Panc1 (cell line): ENCODE measurements at regions of chr11 and their contacts with region 1.

Region 1: DNA sequence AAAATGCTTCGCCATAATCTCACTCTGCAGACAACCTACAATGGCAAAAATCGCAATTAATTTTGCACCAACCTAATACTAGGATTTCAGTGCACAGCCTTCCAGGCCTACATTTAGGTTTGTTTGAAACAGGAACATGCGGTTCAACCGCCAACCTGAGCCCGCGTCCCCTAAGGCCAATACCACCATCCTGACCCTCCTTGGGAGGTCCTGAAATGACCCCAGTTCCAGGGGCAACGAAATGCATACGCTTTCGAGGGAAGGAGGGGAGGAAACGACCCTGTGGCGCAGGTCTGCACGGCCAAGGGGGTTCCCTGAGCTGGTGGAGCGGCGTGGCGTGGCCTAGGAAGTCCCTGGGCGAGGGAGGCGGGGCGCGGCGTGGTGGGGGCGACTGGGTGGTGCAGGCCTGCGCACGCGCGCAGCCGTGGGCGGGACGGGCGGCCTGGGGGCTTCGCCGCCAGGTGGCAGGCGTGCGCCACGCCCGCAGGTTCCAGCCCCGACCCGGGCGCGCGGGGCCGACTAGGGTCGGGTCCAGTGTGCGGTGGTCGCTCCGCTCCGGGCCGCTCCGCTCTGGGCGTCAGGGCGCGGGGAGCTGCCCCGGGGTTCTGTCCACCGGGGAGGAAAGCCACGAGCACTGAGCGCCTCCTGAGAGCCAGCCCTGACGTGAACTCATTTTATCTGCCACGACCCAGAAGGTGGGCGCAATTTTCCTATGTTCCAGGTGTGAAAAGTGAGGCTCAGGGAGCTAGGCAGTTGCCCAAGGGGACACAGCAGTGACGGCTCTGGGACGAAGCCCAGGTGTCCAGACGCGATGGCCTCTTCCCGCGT is 94.1 kb downstream of the SWAP70 start:
- DNase-seq: peak; percentile 38
- ATAC-seq: peak; percentile 66
- H3K4me3 ChIP-seq: peak overlapping the region; percentile 51 to 81
- H3K27ac ChIP-seq: peak overlapping the region; percentile 100
- H3K4me1 ChIP-seq: peaks cover 85% of the 10 kb centered on the region
- H3K27me3 ChIP-seq: no peaks in the 10 kb centered on the region
- CTCF ChIP-seq: peak; percentile 100

Region 2: DNA sequence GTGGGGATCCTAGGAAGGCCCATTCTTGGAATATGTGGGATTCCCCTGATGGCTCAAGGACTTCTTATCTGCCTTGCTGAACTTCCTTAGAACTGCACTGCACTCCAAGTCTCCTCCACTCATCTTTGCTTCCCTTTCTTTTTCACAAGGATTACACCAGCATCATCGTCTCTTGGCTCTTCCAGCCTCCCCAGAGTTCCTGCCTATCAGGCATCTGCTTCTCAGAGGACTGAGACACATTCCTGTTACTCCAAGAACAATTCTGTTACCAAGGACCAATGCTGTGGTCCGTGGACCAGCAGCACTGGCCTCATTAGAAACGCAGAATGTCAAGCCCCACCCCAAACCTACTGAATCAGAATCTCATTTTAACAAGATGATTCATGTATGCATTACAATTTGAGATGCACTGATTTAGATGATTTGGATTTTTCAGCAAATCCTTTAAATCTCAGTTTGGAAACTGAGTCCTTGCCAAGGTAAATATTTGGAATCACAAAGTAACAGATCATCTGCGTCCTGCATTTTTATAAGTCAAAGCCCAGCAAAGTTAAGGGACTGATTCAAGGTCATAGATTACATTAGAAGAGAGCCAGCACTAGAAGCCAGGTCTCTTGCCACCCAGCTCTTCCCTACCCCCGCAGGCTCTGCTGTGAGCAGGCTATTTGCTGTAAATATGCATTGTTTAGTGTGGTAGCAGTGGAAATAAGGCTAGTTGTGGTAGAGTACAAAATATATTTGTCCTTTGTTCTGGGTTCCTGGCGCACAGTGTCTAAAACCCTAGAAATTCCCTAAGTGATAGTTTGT is 16.8 kb after region 1 on chr11:
- CTCF ChIA-PET with region 1: no interaction called
- POLR2A ChIA-PET with region 1: no interaction called
- in situ Hi-C with region 1: no loop called
- intact Hi-C with region 1: no loop called
- DNase-seq: no peak
- ATAC-seq: peak; percentile 69
- H3K4me3 ChIP-seq: no peak overlapping the region
- H3K27ac ChIP-seq: peak overlapping the region; percentile 88
- H3K4me1 ChIP-seq: peaks cover 35% of the 10 kb centered on the region
- H3K27me3 ChIP-seq: no peaks in the 10 kb centered on the region
- CTCF ChIP-seq: no peak

Region 3: DNA sequence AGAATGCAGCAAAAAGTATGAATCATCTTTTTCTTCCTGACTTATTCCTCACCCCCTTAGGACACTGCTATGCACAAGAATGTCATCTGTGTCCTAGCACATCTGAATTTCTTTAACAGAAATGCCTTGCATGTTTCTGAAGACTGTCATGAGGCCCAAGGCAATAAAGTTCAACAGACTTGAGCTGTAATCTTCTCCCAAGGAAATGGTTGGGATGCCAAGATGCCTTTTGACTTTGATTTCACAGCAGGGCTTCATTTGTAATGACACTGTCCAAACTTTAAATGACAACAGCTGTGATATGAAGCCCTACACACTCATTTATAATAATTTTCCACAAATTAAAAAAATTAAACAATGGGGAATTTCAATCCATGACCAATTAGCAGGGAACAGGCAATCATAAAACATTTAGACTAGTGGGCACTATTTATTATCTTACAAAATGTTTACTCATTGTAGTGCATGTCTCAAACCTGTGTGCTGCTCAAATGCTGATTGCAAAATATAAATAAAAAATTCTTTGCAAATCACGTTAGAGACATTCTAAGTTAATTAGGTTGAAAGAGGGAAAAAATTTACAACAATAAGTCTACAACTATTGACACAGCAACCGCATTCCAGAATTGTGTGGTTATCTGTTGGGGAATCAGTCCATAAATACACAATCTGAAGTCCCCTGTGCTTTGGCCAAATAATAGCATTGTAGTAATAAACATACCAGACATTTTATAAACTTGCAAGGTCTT is 148.2 kb after region 1 on chr11:
- CTCF ChIA-PET with region 1: interaction called, 4 read pairs
- POLR2A ChIA-PET with region 1: interaction called, 8 read pairs
- in situ Hi-C with region 1: no loop called
- intact Hi-C with region 1: loop called (anchors 2 kb)
- DNase-seq: peak; percentile 81
- ATAC-seq: peak; percentile 97
- H3K4me3 ChIP-seq: no peak overlapping the region; a peak in 1 of 4 replicates
- H3K27ac ChIP-seq: peak overlapping the region; percentile 100
- H3K4me1 ChIP-seq: peaks cover 29% of the 10 kb centered on the region
- H3K27me3 ChIP-seq: no peaks in the 10 kb centered on the region
- CTCF ChIP-seq: no peak

Region 4: GRCh38 chr11:10091314-10092045 is 333.5 kb after region 1 on chr11:
- CTCF ChIA-PET with region 1: no interaction called
- POLR2A ChIA-PET with region 1: no interaction called
- in situ Hi-C with region 1: no loop called
- intact Hi-C with region 1: loop called (anchors 10 kb)
- DNase-seq: no peak
- ATAC-seq: no peak
- H3K4me3 ChIP-seq: no peak overlapping the region
- H3K27ac ChIP-seq: peak overlapping the region; percentile 62; the same call in 1 of the 2 replicates
- H3K4me1 ChIP-seq: peaks cover 38% of the 10 kb centered on the region
- H3K27me3 ChIP-seq: no peaks in the 10 kb centered on the region
- CTCF ChIP-seq: no peak

Region 5: DNA sequence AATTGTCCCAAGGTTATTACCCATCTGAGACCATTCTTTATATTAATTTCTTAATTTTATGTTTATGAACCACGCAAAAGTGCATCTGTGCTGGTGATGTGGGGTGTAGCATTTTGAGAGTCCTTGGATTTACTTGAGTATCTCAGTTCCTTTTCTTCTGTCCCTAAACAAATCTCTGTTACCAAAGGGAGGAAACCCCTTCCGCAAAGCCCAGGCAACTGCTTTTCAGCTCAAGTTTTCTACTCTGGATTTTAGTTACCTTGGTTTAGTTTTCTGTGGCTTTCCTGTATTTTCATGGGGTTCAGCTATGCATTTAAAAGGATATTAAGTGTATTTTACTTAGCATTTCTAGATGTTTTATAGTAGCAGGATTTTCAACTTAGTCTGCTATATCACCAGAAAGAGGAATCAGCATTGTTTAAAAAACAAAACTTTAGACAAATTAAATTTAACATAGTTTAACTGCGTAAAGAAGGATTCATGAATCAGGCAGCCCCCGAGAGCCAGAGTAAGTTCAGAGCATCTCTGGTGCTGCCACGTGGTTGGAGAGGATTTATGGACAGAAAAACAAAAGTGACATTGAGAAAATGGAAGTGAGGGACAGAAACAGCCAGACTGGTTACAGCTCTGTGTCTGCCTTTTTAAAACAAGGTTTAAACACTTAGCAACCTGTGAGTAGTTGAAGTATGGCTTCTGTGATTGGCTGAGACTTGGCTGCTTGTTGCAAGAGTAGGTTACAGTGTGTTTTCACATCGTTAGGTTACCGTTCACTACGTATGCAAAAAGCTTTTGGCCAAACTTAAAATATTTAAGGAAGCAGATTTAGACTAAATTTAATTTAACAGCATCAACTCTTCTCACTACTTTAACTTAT is 556.4 kb after region 1 on chr11:
- CTCF ChIA-PET with region 1: interaction called, 19 read pairs
- POLR2A ChIA-PET with region 1: interaction called, 5 read pairs
- in situ Hi-C with region 1: no loop called
- intact Hi-C with region 1: loop called (anchors 5 kb)
- DNase-seq: no peak
- ATAC-seq: peak; percentile 95
- H3K4me3 ChIP-seq: peak overlapping the region; percentile 7 to 38; a peak in 3 of 4 replicates
- H3K27ac ChIP-seq: peak overlapping the region; percentile 88
- H3K4me1 ChIP-seq: peaks cover 52% of the 10 kb centered on the region
- H3K27me3 ChIP-seq: no peaks in the 10 kb centered on the region
- CTCF ChIP-seq: no peak

Region 6: GRCh38 chr11:10735481-10736475 is 977.8 kb after region 1 on chr11:
- CTCF ChIA-PET with region 1: no interaction called
- POLR2A ChIA-PET with region 1: no interaction called
- in situ Hi-C with region 1: no loop called
- intact Hi-C with region 1: loop called (anchors 5 kb)
- DNase-seq: peak; percentile 97
- ATAC-seq: peak; percentile 99
- H3K4me3 ChIP-seq: peak overlapping the region; percentile 24 to 52
- H3K27ac ChIP-seq: peak overlapping the region; percentile 74
- H3K4me1 ChIP-seq: peaks cover 11% of the 10 kb centered on the region
- H3K27me3 ChIP-seq: no peaks in the 10 kb centered on the region
- CTCF ChIP-seq: peak; percentile 100